ENCODE measurements at regions of chr12 and their contacts with region 1.

Region 1: DNA sequence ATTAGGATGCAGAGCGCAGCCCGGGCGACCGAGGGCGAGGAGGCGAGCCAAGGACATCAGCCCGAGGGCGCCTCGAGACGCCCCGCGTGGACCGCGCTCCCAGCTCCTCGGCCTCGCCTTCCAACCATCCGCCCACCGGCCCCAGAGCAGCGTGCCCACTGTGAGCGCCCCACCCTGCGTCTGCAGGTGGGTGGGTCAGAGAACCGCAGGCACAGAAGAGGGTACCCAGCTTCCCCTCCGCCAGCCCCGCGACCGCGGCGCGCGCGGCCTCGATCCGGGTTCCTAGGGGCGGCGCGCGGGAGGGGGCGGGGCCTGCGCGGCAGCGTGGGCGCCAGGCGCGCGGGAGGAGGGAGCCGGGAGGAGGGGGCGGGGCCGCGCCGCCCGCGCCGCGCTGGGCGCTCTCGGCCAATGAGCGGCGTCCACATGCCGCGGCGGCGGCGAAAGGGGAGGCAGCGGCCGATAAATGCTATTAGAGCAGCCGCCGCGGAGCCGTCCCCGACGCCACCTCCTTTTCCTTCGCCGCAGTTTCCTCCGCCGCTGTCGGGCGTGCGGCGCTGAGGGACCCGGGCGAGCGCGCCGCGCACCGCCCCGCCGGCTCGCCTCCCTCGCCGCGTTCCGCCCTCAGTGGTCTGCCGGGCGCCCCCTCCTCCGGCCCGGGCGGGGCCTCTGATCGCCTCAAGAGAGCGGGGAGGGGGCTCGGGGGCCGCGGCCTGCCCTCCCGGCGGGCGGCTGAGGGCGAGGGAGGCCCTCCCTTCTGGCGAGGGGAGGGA is at the start of gene ATP2A2:
- DNase-seq: peak; percentile 95
- ATAC-seq: peak; percentile 89
- total RNA-seq, gene ATP2A2: 3,087 TPM

Region 2: GRCh38 chr12:110224379-110225304 is 56.3 kb before region 1 on chr12:
- intact Hi-C with region 1: loop called (anchors 5 kb)
- DNase-seq: no peak
- ATAC-seq: peak; percentile 72

Region 3: DNA sequence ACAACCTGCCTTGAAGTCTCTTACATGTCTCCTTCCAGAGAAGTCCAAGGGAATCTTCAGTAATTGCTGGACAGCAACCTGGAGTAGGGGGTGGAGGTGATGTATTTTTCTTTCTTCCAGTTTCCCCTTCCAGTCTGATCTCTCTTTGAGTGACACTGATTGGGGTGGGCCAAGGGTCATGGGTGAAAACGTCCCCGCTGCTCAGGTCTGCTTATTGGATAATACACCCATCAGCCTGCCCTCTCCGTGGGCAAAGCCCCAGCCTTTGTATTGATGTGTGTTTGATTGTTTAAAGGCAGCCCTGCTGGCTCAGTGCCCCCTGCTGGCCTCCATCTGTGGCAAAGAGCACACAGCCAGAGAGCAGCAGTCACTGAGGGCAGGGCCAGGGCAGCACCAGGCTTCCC is 35.6 kb before region 1 on chr12:
- intact Hi-C with region 1: loop called (anchors 5 kb)
- DNase-seq: peak; percentile 83
- ATAC-seq: peak; percentile 36

Region 4: GRCh38 chr12:110647631-110648040 is 366.7 kb after region 1 on chr12:
- intact Hi-C with region 1: no loop called
- DNase-seq: no peak
- ATAC-seq: no peak

Measured in Right ventricle myocardium superior (tissue), 1 donor.